Ovary (tissue), 10 donors: ENCODE measurements at regions of chr2 and their contacts with region 1.

Region 1: GRCh38 chr2:64914735-64915509 is 74.3 kb upstream of the SLC1A4 start:
- DNase-seq: peak in 4 of 5 donors; percentile 39 to 55 (median 50)
- H3K4me3 ChIP-seq: no peak overlapping the region
- H3K27ac ChIP-seq: peak overlapping the region in 1 of 2 donors; percentile 11
- H3K4me1 ChIP-seq: no peaks in the 10 kb centered on the region
- H3K27me3 ChIP-seq: no peaks in the 10 kb centered on the region
- CTCF ChIP-seq: no peak
- EP300 ChIP-seq: no peak
- POLR2A ChIP-seq: no peak

Region 2: GRCh38 chr2:64426183-64426952 is 488.6 kb before region 1 on chr2:
- intact Hi-C with region 1: no loop called
- DNase-seq: no peak
- H3K4me3 ChIP-seq: no peak overlapping the region
- H3K27ac ChIP-seq: no peak overlapping the region
- H3K4me1 ChIP-seq: no peaks in the 10 kb centered on the region
- H3K27me3 ChIP-seq: no peaks in the 10 kb centered on the region
- CTCF ChIP-seq: no peak
- EP300 ChIP-seq: no peak
- POLR2A ChIP-seq: no peak

Region 3: DNA sequence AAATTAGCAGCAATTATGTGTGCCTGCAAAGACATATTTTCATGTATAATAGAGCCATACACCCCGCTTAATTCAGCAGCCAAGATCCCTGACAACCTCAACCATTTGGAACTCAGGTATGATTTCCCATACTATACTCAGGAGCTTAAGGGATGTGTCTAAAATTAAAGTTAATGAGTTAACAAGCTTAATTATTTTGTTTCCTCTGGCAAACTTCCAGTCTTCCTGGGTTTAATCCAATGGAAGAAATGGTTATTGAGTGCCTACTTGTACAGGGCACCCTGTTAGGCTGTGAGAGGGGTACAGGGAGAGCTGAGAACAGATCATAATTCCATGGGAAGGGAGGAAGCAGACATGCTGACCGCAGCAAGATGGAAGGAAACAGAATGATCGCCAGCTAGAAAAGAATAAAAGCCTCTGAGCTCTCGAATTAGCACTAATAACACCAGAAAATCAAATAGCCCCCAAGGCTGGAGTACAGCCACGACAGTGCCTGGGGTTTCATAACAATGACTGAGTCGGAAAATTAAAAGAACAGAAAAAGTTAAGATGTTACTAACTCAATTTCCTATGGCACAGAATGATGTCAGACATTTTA is 120.5 kb after region 1 on chr2:
- intact Hi-C with region 1: loop called (anchors 2 to 5 kb)
- DNase-seq: no peak
- H3K4me3 ChIP-seq: no peak overlapping the region
- H3K27ac ChIP-seq: no peak overlapping the region
- H3K4me1 ChIP-seq: no peaks in the 10 kb centered on the region
- H3K27me3 ChIP-seq: no peaks in the 10 kb centered on the region
- CTCF ChIP-seq: no peak
- EP300 ChIP-seq: no peak
- POLR2A ChIP-seq: no peak

Region 4: DNA sequence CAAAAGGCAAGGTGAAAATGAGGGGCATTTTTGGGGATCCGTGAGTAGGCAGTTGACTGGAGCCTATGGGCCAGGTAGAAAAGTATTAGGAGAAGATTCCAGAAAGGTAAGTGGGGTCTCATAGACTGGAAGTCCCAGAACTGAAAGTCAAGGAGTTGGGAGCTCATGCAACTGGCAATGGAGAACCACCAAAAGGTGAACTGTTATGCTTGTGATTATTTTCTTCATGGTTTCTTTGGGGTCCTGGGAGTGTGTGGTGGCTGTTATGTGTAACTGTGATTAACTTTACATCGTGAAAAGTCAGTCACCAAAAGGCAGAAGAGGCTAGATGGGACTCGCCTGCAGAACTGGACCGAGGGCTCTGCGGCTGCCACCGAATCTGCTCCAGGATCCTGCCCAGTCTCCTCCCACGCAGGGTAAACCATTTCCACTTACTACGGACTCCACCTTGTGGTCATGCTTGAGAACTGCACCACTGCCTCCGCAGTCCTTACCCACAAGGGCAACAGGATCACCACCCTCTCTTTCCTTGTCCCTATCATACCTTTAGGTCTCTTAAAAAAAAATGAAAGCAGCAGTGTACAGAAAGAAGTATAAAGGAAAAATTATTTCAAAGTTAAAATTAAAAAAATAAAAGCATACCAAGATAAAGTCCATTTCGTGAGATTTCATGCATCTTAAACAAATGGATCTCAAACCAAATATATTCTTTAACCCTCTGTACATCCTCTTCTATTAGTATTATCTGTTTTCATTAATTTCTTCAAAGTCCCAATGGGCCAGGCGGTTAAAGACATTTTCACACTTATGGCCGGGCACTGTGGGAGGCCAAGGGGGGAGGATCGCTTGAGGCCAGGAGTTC is 125.7 kb after region 1 on chr2:
- intact Hi-C with region 1: loop called (anchors 2 to 5 kb)
- DNase-seq: peak; percentile 83 to 88 (median 86)
- H3K4me3 ChIP-seq: no peak overlapping the region
- H3K27ac ChIP-seq: no peak overlapping the region
- H3K4me1 ChIP-seq: no peaks in the 10 kb centered on the region
- H3K27me3 ChIP-seq: no peaks in the 10 kb centered on the region
- CTCF ChIP-seq: peak; percentile 74 to 92 (median 89)
- EP300 ChIP-seq: no peak
- POLR2A ChIP-seq: peak; percentile 12

Region 5: DNA sequence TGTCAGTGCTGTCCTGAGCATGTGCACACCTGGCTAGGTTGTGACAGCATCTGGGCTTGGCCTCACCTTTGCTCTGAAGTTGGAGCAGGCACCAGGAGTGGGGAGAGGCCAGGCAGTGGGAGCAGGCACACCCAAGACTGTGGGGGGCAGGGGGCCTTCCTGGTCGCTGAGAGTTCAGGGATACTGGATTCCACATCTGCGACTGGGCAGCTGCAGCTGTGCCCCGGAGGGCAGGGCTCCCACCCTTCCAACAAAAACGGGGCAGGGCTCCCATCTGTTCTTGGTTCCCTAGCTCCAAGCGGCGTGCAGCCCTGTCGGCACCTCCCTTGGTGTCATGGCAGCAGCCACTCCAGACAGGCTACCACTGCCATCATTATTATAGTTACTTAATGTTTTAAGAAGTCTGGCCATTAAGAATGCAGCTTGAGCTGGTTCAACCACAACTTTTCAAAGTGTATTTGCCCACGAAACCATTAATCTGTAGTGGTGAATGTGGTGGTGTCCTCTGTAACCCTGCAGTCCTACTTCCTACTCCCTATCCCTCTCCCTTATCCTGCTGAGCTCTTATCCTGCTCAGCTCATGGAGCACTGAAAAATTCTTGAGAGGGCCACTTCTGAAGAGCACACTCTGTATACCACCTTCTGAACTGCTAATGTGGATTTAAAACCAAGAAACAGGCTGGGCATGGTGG is 263.0 kb after region 1 on chr2:
- intact Hi-C with region 1: loop called in 1 of 4 experiments (anchors 10 kb)
- DNase-seq: no peak
- H3K4me3 ChIP-seq: no peak overlapping the region
- H3K27ac ChIP-seq: no peak overlapping the region
- H3K4me1 ChIP-seq: no peaks in the 10 kb centered on the region
- H3K27me3 ChIP-seq: no peaks in the 10 kb centered on the region
- CTCF ChIP-seq: no peak
- EP300 ChIP-seq: no peak
- POLR2A ChIP-seq: no peak

Region 6: DNA sequence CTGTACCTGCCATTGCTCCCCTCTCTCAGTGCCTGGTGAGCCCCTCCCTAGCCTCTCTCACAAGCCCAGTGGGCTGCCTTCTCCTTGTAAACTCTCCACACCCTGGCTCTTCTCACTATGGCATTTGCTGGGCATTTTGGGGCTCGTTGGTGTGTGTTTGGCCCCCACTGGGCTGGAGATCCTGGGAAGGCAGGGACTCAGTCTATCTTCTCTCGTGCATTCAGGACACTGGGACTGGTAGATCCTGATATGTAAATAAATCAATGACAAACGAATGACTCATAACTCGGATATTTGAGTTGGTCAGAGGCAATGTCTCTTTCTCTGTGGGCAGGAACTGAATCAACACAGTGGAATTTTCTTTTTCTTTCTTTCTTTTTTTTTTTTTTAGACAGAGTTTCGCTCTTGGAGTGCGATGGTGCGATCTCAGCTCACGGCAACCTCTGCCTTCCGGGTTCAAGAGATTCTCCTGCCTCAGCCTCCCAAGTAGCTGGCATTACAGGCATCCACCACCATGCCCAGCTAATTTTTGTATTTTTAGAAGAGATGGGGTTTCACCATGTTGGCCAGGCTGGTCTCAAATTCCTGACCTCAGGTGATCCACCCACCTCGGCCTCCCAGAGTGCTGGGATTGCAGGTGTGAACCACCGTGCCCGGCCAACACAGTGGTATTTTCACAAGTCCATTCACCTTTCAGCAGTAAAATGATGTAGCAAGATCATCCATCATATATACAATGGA is 662.1 kb after region 1 on chr2:
- intact Hi-C with region 1: loop called in 1 of 4 experiments (anchors 10 kb)
- DNase-seq: no peak
- H3K4me3 ChIP-seq: no peak overlapping the region
- H3K27ac ChIP-seq: no peak overlapping the region
- H3K4me1 ChIP-seq: no peaks in the 10 kb centered on the region
- H3K27me3 ChIP-seq: no peaks in the 10 kb centered on the region
- CTCF ChIP-seq: no peak
- EP300 ChIP-seq: no peak
- POLR2A ChIP-seq: no peak